Activated CD8-positive, alpha-beta T cell treated with anti-CD3 and anti-CD28 coated beads, Interleukin-2, amount 10 ng/mL, durations not matched to agents 7 days and 5 days (primary cell): ENCODE measurements at regions of chr10 and their contacts with region 1.

Region 1: GRCh38 chr10:72273410-72274212 is at the start of gene DDIT4:
- DNase-seq: peak; percentile 99
- ATAC-seq: peak; percentile 93
- H3K4me3 Mint-ChIP-seq: peak within 1 kb of the TSS; percentile 90
- H3K27ac Mint-ChIP-seq: peak within 1 kb of the TSS; percentile 91
- H3K4me1 Mint-ChIP-seq: peaks cover 64% of the 10 kb centered on the region
- H3K27me3 Mint-ChIP-seq: no peaks in the 10 kb centered on the region
- total RNA-seq, gene DDIT4: 382 to 384 TPM

Region 2: GRCh38 chr10:72215652-72216549 is 57.7 kb before region 1 on chr10 and contains the starts of genes ANAPC16 and ASCC1:
- CTCF ChIA-PET with region 1: interaction called, 59 read pairs
- POLR2A ChIA-PET with region 1: interaction called, 12 read pairs
- DNase-seq: peak; percentile 95
- ATAC-seq: peak; percentile 88
- H3K4me3 Mint-ChIP-seq: peak within 1 kb of the TSS; percentile 96
- H3K27ac Mint-ChIP-seq: peak within 1 kb of the TSS; percentile 96
- H3K4me1 Mint-ChIP-seq: peaks cover 52% of the 10 kb centered on the region
- H3K27me3 Mint-ChIP-seq: no peaks in the 10 kb centered on the region
- total RNA-seq, gene ANAPC16: 72.9 TPM
- total RNA-seq, gene ASCC1: 34.8 to 40.3 TPM

Region 3: GRCh38 chr10:72254813-72255568 is 18.6 kb before region 1 on chr10:
- CTCF ChIA-PET with region 1: interaction called, 60 read pairs
- POLR2A ChIA-PET with region 1: interaction called, 88 read pairs
- DNase-seq: peak; percentile 73
- ATAC-seq: peak; percentile 79
- H3K4me3 Mint-ChIP-seq: peak overlapping the region; percentile 77
- H3K27ac Mint-ChIP-seq: peak overlapping the region; percentile 95
- H3K4me1 Mint-ChIP-seq: peaks cover 78% of the 10 kb centered on the region
- H3K27me3 Mint-ChIP-seq: no peaks in the 10 kb centered on the region

Region 4: DNA sequence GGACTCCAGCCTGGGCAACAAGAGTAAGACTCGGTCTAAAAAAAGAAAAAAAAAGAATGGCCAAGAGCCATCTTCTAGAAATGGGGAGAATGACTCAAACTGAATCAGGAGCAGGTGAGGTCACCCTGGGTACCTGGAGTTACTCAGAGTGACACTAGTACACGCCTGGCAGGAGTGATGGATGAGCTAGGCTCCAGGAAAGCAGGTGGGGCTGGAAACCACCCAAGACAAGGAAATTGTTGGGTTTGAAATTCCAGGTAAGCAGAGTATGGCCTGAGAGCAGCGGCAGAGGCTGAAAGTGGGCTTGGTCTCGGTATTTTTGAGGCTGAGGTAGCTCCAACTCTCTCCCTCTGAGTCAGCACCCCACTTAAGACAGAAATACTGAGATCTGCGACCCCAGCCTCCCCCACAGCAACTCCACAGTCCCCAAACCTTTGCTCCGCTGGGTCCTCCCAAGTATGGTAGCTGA is 18.6 kb after region 1 on chr10:
- CTCF ChIA-PET with region 1: interaction called, 55 read pairs
- POLR2A ChIA-PET with region 1: interaction called, 82 read pairs
- DNase-seq: peak; percentile 55
- ATAC-seq: peak; percentile 27
- H3K4me3 Mint-ChIP-seq: peak overlapping the region; percentile 7
- H3K27ac Mint-ChIP-seq: peak overlapping the region; percentile 84
- H3K4me1 Mint-ChIP-seq: peaks cover 64% of the 10 kb centered on the region
- H3K27me3 Mint-ChIP-seq: no peaks in the 10 kb centered on the region

Region 5: DNA sequence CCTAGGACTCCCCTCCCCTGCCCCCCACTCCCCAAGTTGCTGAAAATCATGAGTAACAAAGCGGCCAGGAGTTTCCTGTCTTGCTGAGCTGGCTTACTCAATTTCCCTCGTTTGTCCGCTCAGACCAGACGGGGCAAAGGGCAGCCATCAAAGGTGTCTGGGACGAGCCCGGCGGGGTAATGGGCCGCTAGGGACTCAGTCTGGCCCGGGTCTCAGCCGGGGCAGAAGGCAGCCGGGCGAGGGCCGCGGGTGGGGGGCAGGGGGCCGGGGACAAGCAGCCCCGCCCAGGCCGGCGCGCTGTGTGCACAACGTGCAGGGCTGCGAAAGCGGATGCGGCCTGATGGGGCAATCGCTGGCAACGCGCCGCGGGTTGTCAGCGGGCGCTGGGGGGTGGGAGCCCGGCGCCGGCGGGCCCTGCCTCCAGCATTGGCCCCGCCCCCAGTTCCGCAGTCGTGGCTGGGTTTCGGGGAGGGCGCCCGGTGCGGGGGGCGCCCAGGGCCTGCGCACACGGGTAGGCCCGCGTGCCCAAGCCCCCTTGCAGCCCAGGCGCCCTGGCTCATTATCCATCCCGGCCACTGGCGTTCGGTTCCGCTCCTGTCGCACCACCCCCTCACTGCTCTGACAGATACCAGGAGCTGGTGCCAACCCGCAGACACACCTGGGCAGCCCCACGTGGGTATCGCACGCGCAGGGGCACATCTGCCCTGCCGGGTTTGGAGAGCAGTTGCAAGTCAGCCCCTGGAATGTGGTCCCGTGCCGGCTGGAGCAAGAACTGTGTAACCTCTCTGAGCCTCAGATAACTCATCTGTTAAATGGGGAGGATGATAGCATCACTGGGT is 46.0 kb after region 1 on chr10:
- CTCF ChIA-PET with region 1: interaction called, 73 read pairs
- POLR2A ChIA-PET with region 1: interaction called, 86 read pairs
- DNase-seq: peak; percentile 92
- ATAC-seq: peak; percentile 78
- H3K4me3 Mint-ChIP-seq: peak overlapping the region; percentile 81
- H3K27ac Mint-ChIP-seq: peak overlapping the region; percentile 99
- H3K4me1 Mint-ChIP-seq: peaks cover 88% of the 10 kb centered on the region
- H3K27me3 Mint-ChIP-seq: no peaks in the 10 kb centered on the region

Region 6: DNA sequence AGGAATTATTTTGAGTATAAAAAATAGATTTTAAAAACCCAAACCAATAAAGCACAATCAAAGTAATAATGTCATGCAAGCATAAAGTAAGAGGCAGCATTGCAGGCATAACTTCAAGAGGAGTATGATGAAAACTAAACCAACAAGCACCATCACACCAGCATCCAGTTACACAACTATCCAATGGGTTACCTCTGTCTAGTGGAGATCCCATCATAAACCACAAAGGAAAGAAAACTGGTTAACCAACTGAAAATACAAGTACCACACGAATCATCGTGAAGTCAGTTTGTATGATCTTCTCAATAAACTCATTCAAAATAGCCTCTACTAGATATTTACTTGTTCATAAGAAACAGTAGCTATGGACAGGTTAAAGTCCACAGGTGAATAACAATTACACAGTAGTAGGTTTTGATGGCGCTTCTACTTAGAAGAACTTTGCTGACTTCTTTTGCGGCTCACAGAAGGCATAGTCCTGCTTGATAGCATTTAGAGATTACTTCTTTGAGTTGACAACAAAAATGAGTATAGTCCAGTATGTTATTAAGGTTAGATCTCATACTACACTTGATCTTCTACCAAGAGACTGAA is 235.7 kb after region 1 on chr10:
- CTCF ChIA-PET with region 1: no interaction called
- POLR2A ChIA-PET with region 1: no interaction called
- DNase-seq: no peak
- ATAC-seq: no peak
- H3K4me3 Mint-ChIP-seq: no peak overlapping the region
- H3K27ac Mint-ChIP-seq: no peak overlapping the region
- H3K4me1 Mint-ChIP-seq: peaks cover 10% of the 10 kb centered on the region
- H3K27me3 Mint-ChIP-seq: no peaks in the 10 kb centered on the region